PC-3 (cell line): ENCODE measurements at regions of chr4 and their contacts with region 1.

Region 1: DNA sequence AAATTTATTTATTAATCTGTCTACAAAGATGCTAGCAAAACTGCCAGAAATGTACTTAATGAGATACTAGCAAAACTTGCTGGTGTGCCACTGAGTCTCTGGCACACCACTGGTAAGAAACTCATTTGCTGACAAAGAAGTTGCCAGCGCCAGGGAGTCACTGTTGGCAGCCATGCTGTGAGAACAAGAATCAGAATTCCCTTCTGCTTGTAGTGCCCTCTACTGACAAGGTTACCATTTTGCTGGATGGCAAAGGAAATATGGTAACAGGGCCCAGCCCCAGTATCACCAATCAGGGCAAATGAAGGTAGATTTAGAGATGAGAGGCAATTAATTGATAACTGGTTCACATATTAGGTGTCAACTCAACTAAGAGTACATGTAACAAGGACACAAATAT is 750.1 kb upstream of the ADGRL3 start:
- DNase-seq: no peak
- ATAC-seq: no peak
- H3K4me3 ChIP-seq: no peak overlapping the region
- H3K27ac ChIP-seq: no peak overlapping the region
- H3K4me1 ChIP-seq: no peaks in the 10 kb centered on the region
- H3K27me3 ChIP-seq: no peaks in the 10 kb centered on the region
- CTCF ChIP-seq: peak; percentile 42; the same call in 1 of the 2 replicates

Region 2: DNA sequence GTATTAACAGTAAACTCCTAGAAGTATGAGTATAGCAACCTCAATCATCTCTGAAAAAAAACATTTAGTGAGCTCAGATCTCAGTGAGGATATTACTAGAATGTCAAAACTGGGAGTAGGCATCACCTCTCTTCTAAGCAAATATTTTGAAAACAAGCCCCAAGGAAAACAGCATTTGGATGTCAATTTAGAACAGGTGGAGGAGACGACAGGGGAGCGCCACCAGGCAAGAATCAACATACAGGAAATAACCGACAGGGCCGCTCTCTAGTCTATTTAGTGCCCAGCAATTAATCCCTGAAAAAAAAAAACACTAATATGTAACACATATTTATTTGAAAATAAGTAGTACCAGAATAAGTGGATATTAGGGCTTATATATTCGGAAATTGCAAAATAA is 190.3 kb before region 1 on chr4:
- CTCF ChIA-PET with region 1: no interaction called
- POLR2A ChIA-PET with region 1: no interaction called
- intact Hi-C with region 1: loop called (anchors 10 kb)
- DNase-seq: no peak
- ATAC-seq: no peak
- H3K4me3 ChIP-seq: no peak overlapping the region
- H3K27ac ChIP-seq: no peak overlapping the region
- H3K4me1 ChIP-seq: no peaks in the 10 kb centered on the region
- H3K27me3 ChIP-seq: no peaks in the 10 kb centered on the region
- CTCF ChIP-seq: no peak

Region 3: DNA sequence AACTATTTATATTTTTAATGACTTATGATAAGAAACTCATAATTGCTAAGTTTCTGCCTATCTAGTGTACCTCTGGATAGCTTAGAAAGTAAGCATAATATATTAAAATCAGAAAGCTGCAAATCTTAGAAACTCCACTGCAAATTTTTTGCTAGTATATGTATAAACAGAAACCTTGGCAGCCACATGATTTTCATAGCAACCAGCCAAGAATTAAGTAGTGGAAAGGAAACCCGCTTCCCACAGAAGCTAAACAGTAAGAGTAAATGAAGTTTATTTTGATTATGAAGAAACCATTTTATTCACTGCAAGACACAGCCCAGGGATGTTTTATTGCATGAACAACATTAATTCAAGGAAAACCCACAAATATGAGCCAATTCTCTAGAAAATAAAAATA is 122.4 kb before region 1 on chr4:
- CTCF ChIA-PET with region 1: no interaction called
- POLR2A ChIA-PET with region 1: no interaction called
- intact Hi-C with region 1: no loop called
- DNase-seq: no peak
- ATAC-seq: no peak
- H3K4me3 ChIP-seq: no peak overlapping the region
- H3K27ac ChIP-seq: no peak overlapping the region
- H3K4me1 ChIP-seq: no peaks in the 10 kb centered on the region
- H3K27me3 ChIP-seq: no peaks in the 10 kb centered on the region
- CTCF ChIP-seq: no peak